B cell (primary cell): ENCODE measurements at regions of chr14 and their contacts with region 1.

Region 1: DNA sequence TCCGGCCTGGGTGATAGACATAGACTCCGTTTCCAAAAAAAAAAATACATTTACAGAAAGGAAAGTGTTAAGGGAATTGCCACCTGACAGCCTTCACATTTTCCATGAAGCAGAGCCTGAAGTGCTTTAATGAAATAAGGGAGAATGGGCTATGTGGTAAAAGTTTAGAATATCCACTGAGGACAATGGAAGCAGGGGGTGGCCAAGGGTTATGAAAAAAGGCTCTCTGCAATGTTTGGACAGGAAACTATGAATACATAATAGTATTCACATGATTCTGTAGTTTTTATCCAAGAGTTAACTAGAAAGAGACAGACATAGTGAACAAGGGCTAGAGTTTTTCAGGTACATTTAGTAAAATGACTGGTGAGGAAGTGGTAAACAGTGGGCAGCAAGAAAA is 75.3 kb downstream of the COCH start:
- DNase-seq: no peak
- ATAC-seq: no peak
- H3K4me3 ChIP-seq: no peak overlapping the region
- H3K4me3 Mint-ChIP-seq: no peak overlapping the region
- H3K27ac ChIP-seq: no peak overlapping the region
- H3K27ac Mint-ChIP-seq: no peak overlapping the region
- H3K4me1 ChIP-seq: no peaks in the 10 kb centered on the region
- H3K4me1 Mint-ChIP-seq: no peaks in the 10 kb centered on the region
- H3K27me3 ChIP-seq: no peaks in the 10 kb centered on the region
- H3K27me3 Mint-ChIP-seq: no peaks in the 10 kb centered on the region
- CTCF ChIP-seq: no peak

Region 2: GRCh38 chr14:30938617-30939016 is 11.0 kb before region 1 on chr14:
- CTCF ChIA-PET with region 1: no interaction called
- POLR2A ChIA-PET with region 1: no interaction called
- intact Hi-C with region 1: loop called (anchors 1 kb)
- DNase-seq: no peak
- ATAC-seq: no peak
- H3K4me3 ChIP-seq: no peak overlapping the region
- H3K4me3 Mint-ChIP-seq: no peak overlapping the region
- H3K27ac ChIP-seq: no peak overlapping the region
- H3K27ac Mint-ChIP-seq: no peak overlapping the region
- H3K4me1 ChIP-seq: no peaks in the 10 kb centered on the region
- H3K4me1 Mint-ChIP-seq: no peaks in the 10 kb centered on the region
- H3K27me3 ChIP-seq: no peaks in the 10 kb centered on the region
- H3K27me3 Mint-ChIP-seq: no peaks in the 10 kb centered on the region
- CTCF ChIP-seq: no peak

Region 3: DNA sequence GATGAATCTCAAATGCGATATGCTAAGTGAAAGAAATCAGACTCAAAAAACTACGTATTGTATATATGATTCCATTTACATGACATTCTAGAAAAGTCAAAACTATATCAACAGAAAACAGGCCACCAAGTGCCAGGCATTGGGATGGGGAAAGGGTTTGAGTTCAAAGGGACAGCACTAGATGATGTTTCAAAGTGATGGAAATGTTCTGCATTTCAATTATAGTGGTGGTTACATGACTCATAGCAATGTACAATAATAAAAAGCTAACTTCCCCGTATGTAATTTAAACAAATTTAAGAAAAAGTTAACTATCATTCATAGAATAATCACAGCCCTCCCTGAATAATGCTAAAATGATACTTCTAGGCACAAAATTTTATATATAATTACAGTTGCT is 244.4 kb after region 1 on chr14:
- CTCF ChIA-PET with region 1: no interaction called
- POLR2A ChIA-PET with region 1: no interaction called
- intact Hi-C with region 1: no loop called
- DNase-seq: no peak
- ATAC-seq: no peak
- H3K4me3 ChIP-seq: no peak overlapping the region
- H3K4me3 Mint-ChIP-seq: no peak overlapping the region
- H3K27ac ChIP-seq: no peak overlapping the region
- H3K27ac Mint-ChIP-seq: no peak overlapping the region
- H3K4me1 ChIP-seq: peaks cover 5 to 11% of the 10 kb centered on the region in 2 donors
- H3K4me1 Mint-ChIP-seq: peaks cover 35% of the 10 kb centered on the region
- H3K27me3 ChIP-seq: no peaks in the 10 kb centered on the region
- H3K27me3 Mint-ChIP-seq: no peaks in the 10 kb centered on the region
- CTCF ChIP-seq: no peak